ENCODE measurements at regions of chr17 and their contacts with region 1.

Region 1: DNA sequence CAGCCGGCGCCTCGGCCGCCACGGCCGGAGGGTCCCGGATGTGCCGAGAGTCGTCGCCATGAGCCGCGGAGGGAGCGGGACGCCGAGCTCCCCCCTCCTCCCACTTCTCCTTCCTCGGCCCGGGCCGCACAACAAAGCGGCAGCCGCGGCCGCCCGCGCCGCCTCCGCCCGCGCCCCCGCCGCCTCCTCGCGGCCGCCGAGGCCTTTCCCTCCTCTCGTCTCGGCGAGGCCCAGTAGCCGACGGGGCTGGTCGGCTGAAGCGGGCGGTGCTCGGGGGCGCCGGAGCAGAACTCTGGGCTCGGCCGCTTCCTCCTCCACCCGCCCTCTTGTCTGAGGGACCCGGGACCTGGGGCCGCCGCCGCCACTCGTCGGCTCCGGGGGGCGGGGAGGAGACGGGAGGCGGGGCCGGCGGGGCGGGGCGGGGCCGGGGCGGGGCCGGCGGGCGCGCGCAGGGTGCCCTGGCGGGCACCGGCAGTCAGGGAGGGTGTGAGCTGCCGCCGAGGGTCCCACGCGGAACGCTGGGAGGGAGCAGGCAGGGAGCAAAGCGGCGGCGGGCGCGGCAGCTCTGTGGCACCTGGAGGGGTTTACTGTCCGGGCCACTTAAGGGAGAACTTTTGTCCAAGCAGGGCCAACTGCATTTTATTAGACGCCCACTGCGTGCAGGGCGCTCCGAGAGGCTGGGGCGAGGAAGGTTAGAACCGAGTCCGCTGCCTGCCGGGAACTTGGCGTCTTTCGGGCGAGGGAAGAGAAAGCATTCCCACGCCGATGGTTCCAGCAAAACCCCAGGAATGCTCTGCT is at the start of gene SMURF2:
- DNase-seq: peak; percentile 87 to 92
- ATAC-seq: peak; percentile 90
- H3K4me3 ChIP-seq: peak within 1 kb of the TSS; percentile 90 to 95
- H3K27ac ChIP-seq: peak within 1 kb of the TSS; percentile 87 to 88
- H3K4me1 ChIP-seq: no peaks in the 10 kb centered on the region
- H3K27me3 ChIP-seq: peaks cover 0 to 1% of the 10 kb centered on the region in 2 donors
- total RNA-seq, gene SMURF2: 36.3 to 62.1 TPM

Region 2: DNA sequence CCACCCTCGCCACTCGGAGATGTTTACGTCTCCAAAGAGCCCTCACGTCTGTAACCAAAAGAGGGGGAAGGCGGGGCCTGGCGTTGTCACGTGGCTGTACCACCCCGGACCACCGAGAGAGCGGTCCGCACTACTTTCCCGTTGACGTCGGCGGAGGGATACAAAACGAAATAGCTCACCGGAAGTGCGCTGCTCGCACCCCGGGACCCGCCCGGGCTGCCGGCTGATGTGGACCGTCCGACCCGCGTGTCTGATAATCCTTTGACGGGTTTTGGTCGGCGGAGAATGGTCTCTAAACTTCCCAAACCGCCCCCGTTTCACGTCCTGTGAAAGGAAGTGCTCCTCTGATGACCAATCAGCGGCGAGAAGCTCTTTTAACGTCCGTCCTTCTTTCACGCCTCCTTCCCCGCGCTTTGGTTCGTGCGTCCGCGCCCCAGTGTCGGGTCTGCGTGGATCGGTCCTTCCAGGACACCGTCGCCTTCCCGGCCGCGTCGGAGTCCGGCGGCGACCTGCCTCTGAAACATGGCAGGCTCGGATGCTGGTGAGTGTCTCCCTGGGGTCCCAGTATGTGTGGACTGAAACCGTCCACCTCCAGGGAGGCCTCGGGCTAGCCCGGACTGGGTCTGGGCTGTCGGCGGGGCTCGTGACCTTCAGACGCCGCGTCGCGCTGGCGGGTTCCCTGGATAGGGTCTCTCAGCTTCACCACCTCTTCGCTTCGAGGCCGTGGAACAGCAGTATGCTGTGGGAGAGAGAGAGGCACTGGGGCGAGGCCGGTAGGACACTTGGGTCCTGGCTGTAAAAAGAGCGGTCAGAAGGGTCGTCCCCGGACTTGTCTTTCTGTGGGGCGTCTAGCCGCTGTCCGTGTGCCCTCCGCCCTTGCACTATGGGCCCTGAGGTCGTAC is 155.3 kb before region 1 on chr17 and contains the start of gene CEP95:
- intact Hi-C with region 1: loop called (anchors 5 to 10 kb)
- DNase-seq: peak; percentile 97
- ATAC-seq: peak; percentile 92
- H3K4me3 ChIP-seq: peak within 1 kb of the TSS; percentile 62 to 89
- H3K27ac ChIP-seq: peak within 1 kb of the TSS; percentile 73 to 95
- H3K4me1 ChIP-seq: no peaks in the 10 kb centered on the region
- H3K27me3 ChIP-seq: peaks cover 0 to 1% of the 10 kb centered on the region in 2 donors
- total RNA-seq, gene CEP95: 39.7 to 49.8 TPM

Region 3: GRCh38 chr17:64515419-64515818 is 146.8 kb before region 1 on chr17:
- intact Hi-C with region 1: loop called in 1 of 2 experiments (anchors 10 kb)
- DNase-seq: no peak
- ATAC-seq: no peak
- H3K4me3 ChIP-seq: no peak overlapping the region
- H3K27ac ChIP-seq: no peak overlapping the region
- H3K4me1 ChIP-seq: no peaks in the 10 kb centered on the region
- H3K27me3 ChIP-seq: no peaks in the 10 kb centered on the region

Region 4: GRCh38 chr17:64736804-64737492 is 74.8 kb after region 1 on chr17:
- intact Hi-C with region 1: loop called in 1 of 2 experiments (anchors 10 kb)
- DNase-seq: no peak
- ATAC-seq: no peak
- H3K4me3 ChIP-seq: no peak overlapping the region
- H3K27ac ChIP-seq: no peak overlapping the region
- H3K4me1 ChIP-seq: peaks cover 0 to 3% of the 10 kb centered on the region in 2 donors
- H3K27me3 ChIP-seq: no peaks in the 10 kb centered on the region